Activated T-helper 1 cell treated with anti-CD3 and anti-CD28 coated beads, Interleukin-12 subunit alpha, Interleukin-12 subunit beta, Interleukin-2, Interleukin-4 antibody, amounts not matched to agents 30 ng/mL and 10 ng/mL and 1 ng/mL, durations not matched to agents 14 hours and 24 hours and 36 hours (primary cell): ENCODE measurements at regions of chr3 and their contacts with region 1.

Region 1: DNA sequence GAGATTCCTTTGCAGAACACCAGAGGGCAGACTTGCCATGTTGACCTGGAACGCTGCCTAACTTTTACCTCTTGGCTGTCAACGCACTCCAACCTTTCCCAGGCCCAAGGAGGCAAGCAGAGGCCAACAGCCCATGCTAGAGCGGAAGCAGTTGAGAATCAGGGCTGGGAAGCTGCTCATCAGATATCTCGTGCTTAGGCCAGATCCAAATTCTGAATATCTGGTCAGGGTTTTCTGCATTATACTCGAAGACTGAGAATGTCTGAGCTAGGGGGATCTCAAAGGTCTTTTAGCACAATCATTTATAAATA is 2.5 kb downstream of the XIRP1 start:
- DNase-seq: peak; percentile 46
- H3K4me3 Mint-ChIP-seq: no peak overlapping the region
- H3K27ac Mint-ChIP-seq: peak overlapping the region; percentile 61
- H3K4me1 Mint-ChIP-seq: peaks cover 22% of the 10 kb centered on the region
- H3K27me3 Mint-ChIP-seq: no peaks in the 10 kb centered on the region

Region 2: DNA sequence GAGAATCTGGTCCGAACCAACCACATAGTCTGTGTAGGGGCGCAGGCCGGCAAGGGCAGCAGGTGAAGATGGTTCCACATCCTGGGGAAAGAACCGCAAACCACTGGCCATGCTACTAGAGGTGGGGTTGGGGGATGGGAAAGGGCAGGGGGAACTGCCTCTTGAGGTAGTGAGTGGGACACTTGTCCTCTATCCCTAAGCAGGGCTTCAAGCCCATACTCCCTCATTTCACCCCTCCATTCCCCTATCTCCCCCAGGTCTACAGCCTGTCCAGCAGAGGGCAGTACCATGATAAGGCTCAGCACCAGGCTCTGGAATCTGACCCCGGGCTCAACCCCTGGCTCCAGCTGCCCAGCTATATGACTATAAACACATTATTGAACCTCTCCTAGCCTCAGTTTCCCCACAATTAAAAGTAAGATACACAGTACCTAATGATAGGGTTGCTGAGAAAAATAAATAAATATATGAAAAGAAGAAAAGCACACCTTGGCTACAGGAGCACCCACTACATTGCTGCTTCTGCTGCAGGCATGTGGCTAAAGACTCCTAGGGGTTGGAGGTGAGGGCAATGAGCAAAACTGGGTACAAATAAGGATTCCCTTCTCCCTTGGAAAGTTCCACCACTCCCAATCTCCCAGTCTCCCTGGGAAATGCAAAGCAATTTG is 88.8 kb before region 1 on chr3:
- intact Hi-C with region 1: loop called (anchors 1 kb)
- DNase-seq: peak; percentile 27
- H3K4me3 Mint-ChIP-seq: no peak overlapping the region
- H3K27ac Mint-ChIP-seq: no peak overlapping the region
- H3K4me1 Mint-ChIP-seq: peaks cover 42% of the 10 kb centered on the region
- H3K27me3 Mint-ChIP-seq: peaks cover 2% of the 10 kb centered on the region

Region 3: GRCh38 chr3:39208463-39209055 is 18.6 kb after region 1 on chr3:
- intact Hi-C with region 1: loop called (anchors 1 kb)
- DNase-seq: no peak
- H3K4me3 Mint-ChIP-seq: no peak overlapping the region
- H3K27ac Mint-ChIP-seq: no peak overlapping the region
- H3K4me1 Mint-ChIP-seq: peaks cover 14% of the 10 kb centered on the region
- H3K27me3 Mint-ChIP-seq: peaks cover 26% of the 10 kb centered on the region